ENCODE measurements at regions of chr12 and their contacts with region 1.

Region 1: GRCh38 chr12:118376089-118377020 is at the start of gene SUDS3:
- DNase-seq: peak; percentile 59
- H3K4me3 ChIP-seq: peak within 1 kb of the TSS; percentile 74 to 91 (median 87)
- H3K27ac ChIP-seq: peak within 1 kb of the TSS; percentile 92 to 97 (median 95)
- H3K4me1 ChIP-seq: peaks cover 9 to 55% (median 27%) of the 10 kb centered on the region in 3 donors
- H3K27me3 ChIP-seq: no peaks in the 10 kb centered on the region
- CTCF ChIP-seq: peak; percentile 93 to 99 (median 99)
- POLR2A ChIP-seq: peak in 2 of 4 donors; percentile 38 to 43
- total RNA-seq, gene SUDS3: 43.3 to 55.0 (median 44.8) TPM

Region 2: DNA sequence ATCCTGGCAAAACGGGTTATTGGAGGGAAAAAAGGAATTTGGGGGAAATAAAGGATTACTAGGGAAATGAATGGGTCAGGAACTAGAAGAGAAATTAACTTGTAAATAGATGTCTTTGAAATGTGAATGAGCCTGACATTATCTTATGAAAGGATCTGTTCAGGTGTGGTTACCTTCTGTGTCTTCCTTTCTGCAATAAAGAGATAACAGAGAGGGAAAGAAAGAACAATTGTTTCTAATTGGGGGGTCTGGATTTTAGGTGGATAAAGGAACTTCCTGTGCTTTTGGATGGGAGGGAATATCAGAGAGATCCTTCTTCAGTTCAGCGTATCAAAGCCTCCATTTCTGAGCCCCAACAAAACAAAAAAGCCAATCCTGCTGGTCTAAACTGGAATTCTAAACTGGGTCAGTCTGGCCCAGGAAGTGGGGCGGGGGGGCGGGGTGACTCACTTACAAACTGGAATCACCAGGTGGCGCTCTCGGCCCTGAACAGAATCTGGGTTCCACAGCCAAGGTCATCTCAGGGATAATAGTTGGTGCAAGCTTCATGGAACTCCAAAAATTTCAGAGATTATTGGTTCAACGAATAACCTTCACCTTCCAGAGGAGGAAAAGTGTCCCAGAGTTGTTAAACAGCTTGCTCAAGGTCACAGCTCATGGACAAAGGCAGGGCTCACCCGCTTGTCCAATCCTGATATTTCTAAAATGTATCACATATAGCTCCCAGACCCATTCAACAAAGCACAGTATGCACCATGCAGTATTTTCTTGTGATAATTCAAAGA is 255.6 kb before region 1 on chr12:
- intact Hi-C with region 1: loop called (anchors 5 kb)
- DNase-seq: peak; percentile 2
- H3K4me3 ChIP-seq: no peak overlapping the region
- H3K27ac ChIP-seq: peak overlapping the region; percentile 4 to 54 (median 36)
- H3K4me1 ChIP-seq: peaks cover 0 to 11% (median 3%) of the 10 kb centered on the region in 3 donors
- H3K27me3 ChIP-seq: no peaks in the 10 kb centered on the region
- CTCF ChIP-seq: peak in 5 of 6 experiments; percentile 20 to 81 (median 37)
- POLR2A ChIP-seq: no peak

Region 3: GRCh38 chr12:118183705-118184104 is 192.7 kb before region 1 on chr12:
- intact Hi-C with region 1: loop called (anchors 5 kb)
- DNase-seq: no peak
- H3K4me3 ChIP-seq: no peak overlapping the region
- H3K27ac ChIP-seq: no peak overlapping the region
- H3K4me1 ChIP-seq: peaks cover 0 to 41% (median 9%) of the 10 kb centered on the region in 3 donors
- H3K27me3 ChIP-seq: no peaks in the 10 kb centered on the region
- CTCF ChIP-seq: no peak
- POLR2A ChIP-seq: no peak

Measured in esophagus squamous epithelium (tissue), 5 donors.